ENCODE measurements at regions of chr20 and their contacts with region 1.

Region 1: GRCh38 chr20:63894358-63895201 is at the start of gene DNAJC5:
- DNase-seq: peak; percentile 94 to 99 (median 98)
- ATAC-seq: peak; percentile 88
- H3K4me3 ChIP-seq: peak within 1 kb of the TSS; percentile 61
- H3K4me3 Mint-ChIP-seq: peak within 1 kb of the TSS; percentile 99
- H3K27ac ChIP-seq: peak within 1 kb of the TSS; percentile 59 to 75
- H3K27ac Mint-ChIP-seq: peak within 1 kb of the TSS; percentile 93
- H3K4me1 ChIP-seq: peaks cover 41% of the 10 kb centered on the region
- H3K4me1 Mint-ChIP-seq: peaks cover 47% of the 10 kb centered on the region
- H3K27me3 ChIP-seq: no peaks in the 10 kb centered on the region
- H3K27me3 Mint-ChIP-seq: no peaks in the 10 kb centered on the region
- CTCF ChIP-seq: no peak
- total RNA-seq, gene DNAJC5: 21.4 to 22.5 TPM

Region 2: DNA sequence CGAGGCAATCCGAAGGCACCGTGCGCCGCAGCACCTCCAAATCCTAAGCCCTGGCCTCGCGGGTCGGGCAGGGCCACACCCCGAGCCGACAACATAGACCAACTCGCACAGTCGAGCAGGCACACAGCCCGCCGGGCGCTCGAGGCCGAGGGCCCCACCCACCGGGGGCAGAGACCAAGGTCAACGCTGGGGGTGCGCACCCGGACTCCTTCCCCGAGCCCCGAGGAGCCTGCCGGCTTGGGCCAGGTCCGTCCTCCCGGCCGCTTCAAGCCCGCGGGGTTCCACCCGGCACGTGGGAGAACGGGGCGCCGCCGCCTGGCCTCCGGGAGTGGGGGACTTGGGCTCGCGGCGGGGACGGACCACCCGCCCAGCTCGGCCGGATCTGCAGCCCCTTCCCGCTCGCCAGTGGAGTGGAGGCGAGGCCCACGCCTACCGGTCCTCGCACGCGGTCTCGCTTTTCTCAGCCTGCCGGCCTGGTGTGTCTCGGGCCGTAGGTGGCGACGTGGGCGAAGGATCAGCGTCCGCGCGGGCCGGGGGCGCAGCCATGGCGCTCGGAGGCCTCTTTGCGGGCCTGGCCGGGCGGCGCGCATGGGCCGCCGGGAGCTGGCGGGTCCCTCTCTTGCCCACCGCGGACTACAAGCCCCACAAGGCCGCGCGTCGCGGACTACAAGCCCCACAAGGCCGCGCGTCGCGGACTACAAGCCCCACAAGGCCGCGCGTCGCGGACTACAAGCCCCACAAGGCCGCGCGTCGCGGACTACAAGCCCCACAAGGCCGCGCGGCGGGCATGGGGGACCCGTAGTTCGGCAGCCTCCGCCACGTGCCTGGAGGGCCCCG is 61.5 kb after region 1 on chr20 and contains the start of gene UCKL1:
- CTCF ChIA-PET with region 1: no interaction called
- POLR2A ChIA-PET with region 1: interaction called, 12 read pairs
- intact Hi-C with region 1: loop called in 1 of 2 experiments (anchors 1 kb)
- DNase-seq: peak; percentile 81 to 95 (median 88)
- ATAC-seq: peak; percentile 79
- H3K4me3 ChIP-seq: peak within 1 kb of the TSS; percentile 77
- H3K4me3 Mint-ChIP-seq: peak within 1 kb of the TSS; percentile 87
- H3K27ac ChIP-seq: peak within 1 kb of the TSS; percentile 45 to 69
- H3K27ac Mint-ChIP-seq: peak within 1 kb of the TSS; percentile 82
- H3K4me1 ChIP-seq: peaks cover 59% of the 10 kb centered on the region
- H3K4me1 Mint-ChIP-seq: peaks cover 37% of the 10 kb centered on the region
- H3K27me3 ChIP-seq: no peaks in the 10 kb centered on the region
- H3K27me3 Mint-ChIP-seq: no peaks in the 10 kb centered on the region
- CTCF ChIP-seq: no peak
- total RNA-seq, gene UCKL1: 41.3 to 46.1 TPM